Gastrocnemius medialis (tissue), 4 donors: ENCODE measurements at regions of chr6 and their contacts with region 1.

Region 1: GRCh38 chr6:46129629-46130511 is at the start of gene ENPP4:
- DNase-seq: peak; percentile 78 to 92
- ATAC-seq: peak; percentile 95 to 97
- H3K4me3 ChIP-seq: peak within 1 kb of the TSS; percentile 72 to 97 (median 88)
- H3K27ac ChIP-seq: peak within 1 kb of the TSS; percentile 89 to 92 (median 91)
- H3K4me1 ChIP-seq: peaks cover 28 to 29% of the 10 kb centered on the region in 2 donors
- H3K27me3 ChIP-seq: no peaks in the 10 kb centered on the region
- CTCF ChIP-seq: no peak
- POLR2A ChIP-seq: peak; percentile 93 to 96
- total RNA-seq, gene ENPP4: 25.1 to 41.8 (median 33.1) TPM

Region 2: GRCh38 chr6:45933855-45934254 is 196.0 kb before region 1 on chr6:
- in situ Hi-C with region 1: no loop called
- intact Hi-C with region 1: no loop called
- DNase-seq: no peak
- ATAC-seq: no peak
- H3K4me3 ChIP-seq: no peak overlapping the region
- H3K27ac ChIP-seq: peak overlapping the region in 3 of 4 donors; percentile 6 to 49 (median 10)
- H3K4me1 ChIP-seq: peaks cover 13% of the 10 kb centered on the region in 2 donors
- H3K27me3 ChIP-seq: no peaks in the 10 kb centered on the region
- CTCF ChIP-seq: no peak
- POLR2A ChIP-seq: no peak

Region 3: DNA sequence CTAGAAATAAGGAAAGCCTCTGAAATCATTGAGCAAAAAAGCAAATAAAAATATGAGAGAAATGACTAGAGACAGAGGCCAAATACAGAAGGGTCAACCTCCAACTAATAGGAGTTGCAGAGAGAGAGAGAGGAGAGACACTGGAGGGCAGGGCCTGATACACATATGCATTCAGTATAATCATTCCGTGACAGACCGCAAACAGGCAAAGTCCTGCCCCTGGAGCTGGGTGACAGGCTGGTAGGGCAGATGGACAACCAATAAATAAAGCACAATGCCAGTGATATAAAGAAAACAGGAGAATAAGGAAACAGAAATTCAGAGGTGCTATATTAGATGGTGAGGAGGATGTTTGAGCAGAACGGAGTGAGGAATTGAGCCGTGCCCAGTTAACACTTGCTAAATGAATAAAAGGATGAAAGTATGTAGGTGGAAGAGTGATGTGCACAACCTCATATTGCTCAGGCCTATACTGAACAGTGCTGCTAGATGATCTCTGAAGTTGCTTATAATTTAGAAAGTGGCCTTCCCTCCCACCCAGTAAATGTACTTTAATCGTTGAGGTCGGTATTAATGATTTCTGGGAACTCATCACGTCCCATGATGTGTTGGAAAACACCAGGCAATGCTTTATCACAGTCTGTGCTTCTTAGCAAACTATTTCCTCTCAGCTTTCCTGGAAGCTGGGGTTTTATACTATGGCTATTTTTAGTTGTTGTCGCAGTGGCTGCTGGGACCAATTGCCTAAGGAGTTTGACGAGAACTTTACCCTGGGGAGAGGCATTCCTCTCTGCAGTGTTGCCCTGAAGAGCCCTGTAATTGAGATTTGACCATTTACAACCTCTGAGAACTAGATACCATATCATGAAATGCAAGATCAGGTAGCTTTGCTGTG is 76.6 kb before region 1 on chr6:
- in situ Hi-C with region 1: no loop called
- intact Hi-C with region 1: loop called (anchors 5 kb)
- DNase-seq: peak; percentile 58 to 67
- ATAC-seq: peak; percentile 97 to 98
- H3K4me3 ChIP-seq: no peak overlapping the region
- H3K27ac ChIP-seq: peak overlapping the region; percentile 81 to 87 (median 86)
- H3K4me1 ChIP-seq: peaks cover 37 to 47% of the 10 kb centered on the region in 2 donors
- H3K27me3 ChIP-seq: no peaks in the 10 kb centered on the region
- CTCF ChIP-seq: no peak
- POLR2A ChIP-seq: peak; percentile 55 to 62

Region 4: DNA sequence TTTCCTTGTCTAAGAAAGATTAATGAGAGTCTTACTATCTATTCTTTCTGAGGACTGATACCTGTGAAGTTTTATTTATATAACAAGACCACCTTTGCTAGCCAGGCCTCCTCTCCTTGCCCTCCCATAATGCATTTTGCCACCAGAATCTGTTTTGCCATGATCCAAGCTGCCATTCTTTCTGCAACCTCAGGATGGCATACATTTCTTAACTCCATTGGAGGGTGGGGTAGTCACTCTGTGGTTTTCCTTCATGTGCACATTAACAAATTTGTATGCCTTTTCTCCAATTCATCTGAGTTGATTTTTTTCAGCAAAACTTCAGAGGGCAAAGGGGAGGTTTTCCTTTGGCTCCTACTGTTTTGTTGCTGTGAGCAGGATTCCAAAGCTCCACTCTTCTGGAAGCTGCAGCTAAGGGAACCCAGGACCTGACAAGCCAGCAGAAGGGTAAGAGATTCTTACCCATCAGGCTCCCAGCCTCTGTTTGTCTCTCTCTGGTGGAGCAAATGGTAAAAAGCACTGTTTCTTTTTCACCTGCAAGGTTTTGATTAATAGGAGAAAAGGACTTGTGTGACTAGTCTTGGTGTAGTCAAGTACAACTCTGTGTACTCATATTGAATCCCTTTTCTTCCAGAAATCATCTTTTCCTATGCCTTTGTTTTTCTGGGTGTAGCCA is 26.3 kb before region 1 on chr6:
- in situ Hi-C with region 1: no loop called
- intact Hi-C with region 1: loop called (anchors 2 kb)
- DNase-seq: no peak
- ATAC-seq: peak; percentile 56
- H3K4me3 ChIP-seq: peak overlapping the region in 1 of 4 donors; percentile 21
- H3K27ac ChIP-seq: peak overlapping the region; percentile 84 to 90 (median 86)
- H3K4me1 ChIP-seq: peaks cover 45 to 50% of the 10 kb centered on the region in 2 donors
- H3K27me3 ChIP-seq: no peaks in the 10 kb centered on the region
- CTCF ChIP-seq: peak in 4 of 5 experiments; percentile 26 to 45 (median 36)
- POLR2A ChIP-seq: no peak

Region 5: DNA sequence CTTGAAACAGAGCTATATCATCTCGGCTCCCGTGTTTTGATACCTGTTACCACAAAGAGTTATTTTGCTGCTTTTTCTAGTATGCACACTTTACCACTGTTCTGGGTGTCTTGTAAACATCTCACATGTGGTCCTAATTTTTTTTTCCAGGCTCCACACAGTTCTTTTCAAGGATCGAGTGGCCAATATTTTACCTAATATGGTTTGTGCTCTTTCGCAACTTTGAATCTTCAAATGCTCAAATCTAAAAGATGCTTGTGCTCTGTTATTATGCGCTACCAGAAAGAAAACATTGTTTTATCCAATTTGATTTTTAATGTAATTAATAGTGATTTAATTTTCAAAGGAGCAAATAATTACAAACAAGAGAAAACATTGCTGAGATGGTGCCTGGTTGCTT is 30.2 kb after region 1 on chr6:
- in situ Hi-C with region 1: no loop called
- intact Hi-C with region 1: no loop called
- DNase-seq: no peak
- ATAC-seq: no peak
- H3K4me3 ChIP-seq: no peak overlapping the region
- H3K27ac ChIP-seq: no peak overlapping the region
- H3K4me1 ChIP-seq: no peaks in the 10 kb centered on the region
- H3K27me3 ChIP-seq: no peaks in the 10 kb centered on the region
- CTCF ChIP-seq: no peak
- POLR2A ChIP-seq: no peak

Region 6: DNA sequence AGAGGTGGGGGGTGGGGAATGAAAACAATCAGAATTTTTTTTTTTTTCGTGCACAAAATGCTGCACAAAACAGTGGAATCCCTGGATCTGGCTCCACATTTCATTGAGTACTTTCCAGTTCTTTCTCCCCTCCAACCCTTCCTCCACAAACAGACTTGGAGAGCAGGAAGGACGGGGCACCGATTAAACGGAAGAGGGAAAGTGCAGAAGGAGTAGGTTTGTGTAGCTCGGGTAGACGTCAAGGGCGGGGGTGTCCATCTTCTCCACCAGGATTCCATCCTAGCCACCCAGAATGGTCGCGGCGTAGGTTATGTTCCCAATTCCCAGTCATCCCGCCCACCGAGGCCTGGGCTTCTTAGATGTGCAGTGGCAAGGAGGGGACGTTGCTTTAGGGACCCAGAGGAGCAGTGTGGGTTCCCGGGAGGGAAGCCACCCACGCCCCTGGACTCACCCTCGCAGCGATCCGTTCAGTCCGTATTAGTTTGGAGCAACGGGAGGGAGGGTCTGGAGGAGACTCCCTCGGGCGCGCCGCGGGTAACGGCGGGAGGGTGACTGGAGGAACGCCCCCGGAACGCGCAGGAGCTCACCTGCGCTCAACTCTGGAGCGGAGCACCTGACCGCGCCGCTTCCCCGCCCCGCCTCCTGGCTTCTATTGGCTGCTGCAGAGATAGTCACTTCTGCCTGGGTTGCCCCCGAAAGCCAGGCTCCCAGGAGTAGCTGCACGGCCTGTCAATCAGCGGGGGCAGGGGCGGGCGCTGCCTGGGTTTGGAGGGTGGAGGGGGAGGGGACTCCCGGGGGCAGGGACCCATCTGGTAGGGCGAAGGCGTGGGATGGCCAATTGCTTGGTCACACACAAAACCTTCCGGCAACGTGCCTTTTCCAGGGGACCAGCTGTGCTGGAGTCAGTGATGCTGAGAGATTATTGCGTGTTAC is 40.8 kb after region 1 on chr6 and contains the start of gene ENPP5:
- in situ Hi-C with region 1: no loop called
- intact Hi-C with region 1: loop called (anchors 2 kb)
- DNase-seq: peak; percentile 88 to 93
- ATAC-seq: peak; percentile 82 to 90
- H3K4me3 ChIP-seq: peak within 1 kb of the TSS; percentile 71 to 91 (median 81)
- H3K27ac ChIP-seq: peak within 1 kb of the TSS; percentile 74 to 92 (median 86)
- H3K4me1 ChIP-seq: peaks cover 43 to 47% of the 10 kb centered on the region in 2 donors
- H3K27me3 ChIP-seq: no peaks in the 10 kb centered on the region
- CTCF ChIP-seq: no peak
- POLR2A ChIP-seq: peak; percentile 75 to 83
- total RNA-seq, gene ENPP5: 9.9 to 28.3 (median 19.2) TPM